GM12878 (cell line): ENCODE measurements at regions of chr13 and their contacts with region 1.

Region 1: DNA sequence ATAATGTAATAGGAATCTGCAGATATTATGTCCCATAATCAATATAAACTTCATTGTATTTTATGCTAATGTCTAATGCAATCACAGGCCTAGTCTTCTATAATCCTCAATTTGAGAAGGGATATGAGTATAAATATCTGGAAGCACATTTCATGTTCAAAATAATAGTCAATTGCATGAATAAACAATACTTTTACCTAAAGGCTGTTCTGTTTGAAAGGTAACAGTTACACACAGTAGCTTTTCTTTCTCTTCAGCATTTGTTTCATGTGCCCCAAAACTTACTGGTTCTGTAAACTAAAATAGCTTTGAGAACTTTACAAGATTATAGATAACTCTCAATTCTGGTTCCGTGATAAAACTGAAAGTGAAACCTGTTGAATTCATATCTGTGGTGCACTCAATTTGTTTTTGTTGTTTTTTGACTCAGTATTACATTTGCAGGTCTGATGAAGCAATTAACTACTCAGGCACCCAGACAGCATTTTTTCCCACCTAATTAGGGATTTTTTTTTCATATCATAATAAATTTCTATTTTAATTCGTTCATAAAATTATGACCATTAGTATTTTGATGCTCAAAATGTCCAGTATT is 1193.8 kb downstream of the SLITRK1 start:
- DNase-seq: no peak
- ATAC-seq: peak; percentile 93
- H3K4me3 ChIP-seq: no peak overlapping the region
- H3K27ac ChIP-seq: no peak overlapping the region
- H3K4me1 ChIP-seq: no peaks in the 10 kb centered on the region
- H3K27me3 ChIP-seq: no peaks in the 10 kb centered on the region
- CTCF ChIP-seq: no peak
- EP300 ChIP-seq: no peak
- POLR2A ChIP-seq: no peak
- RAD21 ChIP-seq: no peak

Region 2: DNA sequence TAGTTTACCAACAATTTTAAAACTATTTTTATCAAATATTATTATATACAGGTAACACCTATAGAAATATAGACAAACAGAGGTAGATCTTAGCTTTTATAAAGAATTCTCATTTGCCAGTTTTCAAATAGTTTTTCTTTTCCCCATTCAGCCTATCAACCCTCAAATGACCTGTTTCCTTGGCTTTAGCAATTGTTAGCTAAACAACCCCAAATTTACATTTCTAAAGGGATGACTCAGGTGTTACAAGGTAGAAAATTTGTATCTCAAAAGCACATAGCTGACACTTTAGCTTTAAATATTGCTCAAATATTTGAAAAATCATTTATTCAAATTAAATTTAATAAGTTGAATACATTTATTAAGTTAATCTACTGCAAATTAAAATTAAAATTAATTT is 13.5 kb before region 1 on chr13:
- CTCF ChIA-PET with region 1: interaction called, 3 read pairs
- POLR2A ChIA-PET with region 1: no interaction called
- RAD21 ChIA-PET with region 1: interaction called, 5 read pairs
- SMC1A ChIA-PET with region 1: interaction called, 16 read pairs
- in situ Hi-C with region 1: no loop called
- intact Hi-C with region 1: no loop called
- DNase-seq: no peak
- ATAC-seq: no peak
- H3K4me3 ChIP-seq: no peak overlapping the region
- H3K27ac ChIP-seq: no peak overlapping the region
- H3K4me1 ChIP-seq: no peaks in the 10 kb centered on the region
- H3K27me3 ChIP-seq: no peaks in the 10 kb centered on the region
- CTCF ChIP-seq: no peak
- EP300 ChIP-seq: no peak
- POLR2A ChIP-seq: no peak
- RAD21 ChIP-seq: no peak

Region 3: DNA sequence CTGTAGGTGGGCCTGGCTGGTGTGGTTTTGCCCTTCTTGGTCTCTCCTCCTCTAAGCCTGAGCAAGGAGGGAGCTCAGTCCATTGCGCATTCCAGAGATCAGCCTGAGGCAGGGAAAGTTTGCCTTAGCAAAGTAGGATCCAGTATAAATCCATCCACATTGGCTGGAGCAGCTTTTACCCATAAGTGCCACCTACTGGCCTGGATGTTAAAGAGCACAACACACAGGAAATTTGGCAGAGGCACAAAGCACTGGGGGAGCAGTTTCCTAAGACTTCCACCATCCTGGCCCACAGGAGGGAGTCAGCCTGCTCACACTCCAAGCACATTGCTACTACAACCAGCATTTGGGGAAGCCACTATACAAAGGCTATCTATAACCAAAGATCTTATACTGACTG is 69.5 kb after region 1 on chr13:
- CTCF ChIA-PET with region 1: no interaction called
- POLR2A ChIA-PET with region 1: no interaction called
- RAD21 ChIA-PET with region 1: no interaction called
- SMC1A ChIA-PET with region 1: no interaction called
- in situ Hi-C with region 1: no loop called
- intact Hi-C with region 1: no loop called
- DNase-seq: no peak
- ATAC-seq: peak; percentile 77
- H3K4me3 ChIP-seq: no peak overlapping the region
- H3K27ac ChIP-seq: no peak overlapping the region
- H3K4me1 ChIP-seq: no peaks in the 10 kb centered on the region
- H3K27me3 ChIP-seq: no peaks in the 10 kb centered on the region
- CTCF ChIP-seq: peak in 2 of 3 experiments; percentile 47 to 51; a peak in 3 of 6 replicates
- EP300 ChIP-seq: no peak
- POLR2A ChIP-seq: no peak
- RAD21 ChIP-seq: no peak